SK-N-SH (cell line): ENCODE measurements at regions of chr1 and their contacts with region 1.

Region 1: GRCh38 chr1:23184212-23184934 is 15.7 kb upstream of the LUZP1 start:
- DNase-seq: peak; percentile 64
- H3K4me3 ChIP-seq: peak overlapping the region; percentile 15 to 51; a peak in 3 of 4 replicates
- H3K27ac ChIP-seq: no peak overlapping the region
- H3K4me1 ChIP-seq: peaks cover 0 to 7% of the 10 kb centered on the region in 2 experiments; a peak in 3 of 4 replicates
- H3K27me3 ChIP-seq: no peaks in the 10 kb centered on the region
- CTCF ChIP-seq: peak; percentile 90
- EP300 ChIP-seq: no peak
- RAD21 ChIP-seq: peak; percentile 89

Region 2: DNA sequence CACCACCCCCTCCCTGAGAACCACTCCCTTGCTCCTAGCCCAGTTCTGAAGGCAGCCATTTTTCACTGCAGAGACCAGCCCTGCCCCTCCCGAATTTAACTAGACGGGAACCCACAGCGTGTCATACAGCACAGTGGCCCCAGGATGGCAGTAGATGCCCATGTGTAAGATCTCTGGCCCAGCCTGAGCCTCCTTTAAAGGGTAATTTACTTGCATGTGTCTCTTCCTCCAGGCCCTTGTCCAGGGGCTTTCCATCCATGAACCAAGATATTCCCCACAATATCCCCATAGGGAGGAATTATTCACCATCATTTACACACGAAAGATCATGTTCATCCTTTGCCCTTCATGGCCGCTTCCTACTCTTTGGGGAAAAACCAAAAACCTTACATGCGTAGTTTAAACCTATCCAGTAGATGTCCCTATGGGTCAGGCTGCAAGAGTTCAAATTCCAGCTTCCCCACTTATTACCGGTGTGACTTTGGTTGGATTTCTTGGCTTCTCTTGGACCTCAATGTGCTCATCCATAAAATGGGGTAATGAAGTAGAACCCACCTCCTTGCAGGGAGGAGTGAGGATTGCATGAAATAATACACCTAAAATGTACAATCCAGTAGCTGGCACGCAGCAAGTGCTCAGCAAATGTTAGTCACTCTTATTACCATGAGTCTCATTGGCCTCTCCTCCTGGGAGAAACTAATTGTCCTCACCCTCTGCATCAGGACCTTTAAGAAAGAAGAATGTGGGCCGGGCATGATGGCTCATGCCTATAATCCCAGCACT is 207.7 kb before region 1 on chr1:
- CTCF ChIA-PET with region 1: interaction called, 159 read pairs
- POLR2A ChIA-PET with region 1: no interaction called
- DNase-seq: peak; percentile 82
- H3K4me3 ChIP-seq: no peak overlapping the region
- H3K27ac ChIP-seq: no peak overlapping the region
- H3K4me1 ChIP-seq: peaks cover 3 to 13% of the 10 kb centered on the region in 2 experiments; a peak in 2 of 4 replicates
- H3K27me3 ChIP-seq: no peaks in the 10 kb centered on the region
- CTCF ChIP-seq: peak; percentile 88
- EP300 ChIP-seq: no peak
- RAD21 ChIP-seq: peak; percentile 91

Region 3: GRCh38 chr1:23050201-23050600 is 134.2 kb before region 1 on chr1:
- CTCF ChIA-PET with region 1: interaction called, 14 read pairs
- POLR2A ChIA-PET with region 1: no interaction called
- DNase-seq: no peak
- H3K4me3 ChIP-seq: no peak overlapping the region
- H3K27ac ChIP-seq: peak overlapping the region in 1 of 2 experiments; percentile 5; a peak in 1 of 4 replicates
- H3K4me1 ChIP-seq: peaks cover 4 to 15% of the 10 kb centered on the region in 2 experiments
- H3K27me3 ChIP-seq: no peaks in the 10 kb centered on the region
- CTCF ChIP-seq: no peak
- EP300 ChIP-seq: no peak
- RAD21 ChIP-seq: no peak

Region 4: DNA sequence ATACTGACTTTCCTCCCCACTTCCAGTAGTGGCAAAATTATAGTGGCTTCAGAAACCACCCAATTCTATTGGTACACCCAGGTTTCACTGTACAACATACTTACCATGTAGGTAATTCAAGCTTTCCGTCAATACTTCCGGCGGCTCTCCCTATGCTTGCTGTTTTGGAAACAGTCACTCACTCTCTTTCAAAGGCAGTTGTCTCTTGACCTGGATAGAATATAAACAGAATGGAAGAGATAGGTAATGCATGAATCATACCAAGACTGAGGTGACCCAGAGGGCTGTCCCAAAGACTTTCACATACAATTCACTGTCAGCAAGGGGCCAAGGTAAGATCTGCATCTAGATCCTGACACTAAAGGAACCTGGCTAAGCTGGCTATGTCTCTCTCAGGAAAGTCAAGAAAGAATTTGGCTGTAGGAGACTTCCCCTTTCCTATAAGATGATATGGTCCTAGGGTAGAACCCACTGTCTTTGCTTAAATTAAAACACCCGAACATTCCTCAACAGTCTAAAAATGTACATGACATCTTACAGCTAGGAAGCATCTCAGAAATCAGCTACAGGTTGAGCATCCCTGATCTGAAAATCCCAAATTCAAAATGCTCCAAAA is 75.3 kb before region 1 on chr1:
- CTCF ChIA-PET with region 1: interaction called, 96 read pairs
- POLR2A ChIA-PET with region 1: no interaction called
- DNase-seq: no peak
- H3K4me3 ChIP-seq: no peak overlapping the region
- H3K27ac ChIP-seq: no peak overlapping the region
- H3K4me1 ChIP-seq: peaks cover 0 to 5% of the 10 kb centered on the region in 2 experiments; a peak in 2 of 4 replicates
- H3K27me3 ChIP-seq: no peaks in the 10 kb centered on the region
- CTCF ChIP-seq: no peak
- EP300 ChIP-seq: no peak
- RAD21 ChIP-seq: no peak

Region 5: DNA sequence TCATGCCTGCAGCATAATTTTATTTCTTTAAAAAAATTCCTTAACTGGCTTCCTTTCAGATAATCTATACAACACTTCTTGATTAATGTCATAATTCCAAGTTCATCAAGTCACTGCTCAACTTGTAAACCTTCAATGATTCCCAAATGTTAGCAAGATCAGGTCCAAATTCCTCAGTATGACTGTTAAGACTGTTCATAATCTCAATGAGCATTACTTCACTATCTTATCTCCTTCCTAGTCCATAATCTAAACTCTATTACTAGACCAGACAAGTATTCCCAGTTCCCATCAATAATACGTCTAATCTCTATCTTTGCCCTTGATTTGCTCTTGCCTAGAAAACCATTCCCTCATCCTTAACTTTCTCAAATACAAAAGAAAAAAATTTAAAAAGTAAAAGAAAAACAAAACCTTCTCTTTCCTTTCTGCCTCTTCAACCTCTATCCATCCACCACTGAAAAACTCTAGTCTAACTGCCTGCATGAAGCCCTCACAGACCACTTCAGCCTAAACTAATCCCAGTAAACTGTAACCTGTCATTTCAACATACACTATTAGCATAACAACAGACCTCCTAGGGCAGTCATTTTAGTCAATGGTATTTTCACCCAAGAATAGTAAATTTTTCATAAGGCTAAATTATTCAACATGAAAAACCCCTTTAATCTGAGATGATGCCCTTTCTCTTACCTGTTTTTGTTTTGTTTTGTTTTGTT is 31.2 kb before region 1 on chr1:
- CTCF ChIA-PET with region 1: interaction called, 15 read pairs
- POLR2A ChIA-PET with region 1: no interaction called
- DNase-seq: no peak
- H3K4me3 ChIP-seq: no peak overlapping the region
- H3K27ac ChIP-seq: no peak overlapping the region
- H3K4me1 ChIP-seq: peaks cover 4 to 10% of the 10 kb centered on the region in 2 experiments; a peak in 2 of 4 replicates
- H3K27me3 ChIP-seq: no peaks in the 10 kb centered on the region
- CTCF ChIP-seq: no peak
- EP300 ChIP-seq: no peak
- RAD21 ChIP-seq: no peak

Region 6: GRCh38 chr1:23202263-23202749 is 17.9 kb after region 1 on chr1:
- CTCF ChIA-PET with region 1: interaction called, 67 read pairs
- POLR2A ChIA-PET with region 1: no interaction called
- DNase-seq: no peak
- H3K4me3 ChIP-seq: no peak overlapping the region
- H3K27ac ChIP-seq: peak overlapping the region in 1 of 2 experiments; percentile 25; a peak in 2 of 4 replicates
- H3K4me1 ChIP-seq: peaks cover 0 to 10% of the 10 kb centered on the region in 2 experiments; a peak in 2 of 4 replicates
- H3K27me3 ChIP-seq: no peaks in the 10 kb centered on the region
- CTCF ChIP-seq: no peak
- EP300 ChIP-seq: no peak
- RAD21 ChIP-seq: no peak